K562 (cell line): ENCODE measurements at regions of chr1 and their contacts with region 1.

Region 1: DNA sequence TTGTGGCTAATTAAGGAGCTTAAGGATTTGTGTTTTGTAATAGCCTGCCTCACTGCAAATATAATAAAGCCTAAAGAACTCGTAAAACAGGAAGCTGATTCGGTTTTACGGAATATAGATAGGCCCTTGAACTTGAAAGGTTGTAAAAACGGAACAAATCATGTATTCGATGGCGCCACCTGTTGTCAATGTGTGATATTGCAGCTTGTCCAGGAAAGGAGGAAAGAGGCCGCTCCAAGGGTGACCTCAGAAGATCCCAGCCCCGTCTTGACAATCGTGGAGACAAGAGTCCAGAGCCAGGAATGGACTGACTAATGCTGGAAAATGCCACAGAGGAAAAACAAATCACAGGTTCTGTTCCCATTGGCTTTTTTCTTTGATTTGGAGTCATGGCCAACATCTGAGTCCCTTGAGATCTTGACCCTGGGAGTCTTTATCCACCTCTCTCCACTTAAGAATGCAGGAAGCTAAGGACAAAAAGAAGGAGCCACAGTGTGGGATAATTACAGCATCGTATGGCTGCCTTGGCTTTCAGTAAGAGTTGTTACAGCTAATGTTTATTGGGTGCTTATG is 7.0 kb upstream of the IGSF21 start:
- DNase-seq: peak; percentile 71 to 88 (median 82)
- ATAC-seq: peak; percentile 82
- H3K4me3 ChIP-seq: no peak overlapping the region
- H3K27ac ChIP-seq: no peak overlapping the region
- H3K4me1 ChIP-seq: no peaks in the 10 kb centered on the region
- H3K27me3 ChIP-seq: no peaks in the 10 kb centered on the region; a peak in 1 of 5 replicates
- CTCF ChIP-seq: peak; percentile 65 to 89 (median 83)
- EP300 ChIP-seq: no peak
- POLR2A ChIP-seq: no peak
- RAD21 ChIP-seq: peak; percentile 35 to 74

Region 2: DNA sequence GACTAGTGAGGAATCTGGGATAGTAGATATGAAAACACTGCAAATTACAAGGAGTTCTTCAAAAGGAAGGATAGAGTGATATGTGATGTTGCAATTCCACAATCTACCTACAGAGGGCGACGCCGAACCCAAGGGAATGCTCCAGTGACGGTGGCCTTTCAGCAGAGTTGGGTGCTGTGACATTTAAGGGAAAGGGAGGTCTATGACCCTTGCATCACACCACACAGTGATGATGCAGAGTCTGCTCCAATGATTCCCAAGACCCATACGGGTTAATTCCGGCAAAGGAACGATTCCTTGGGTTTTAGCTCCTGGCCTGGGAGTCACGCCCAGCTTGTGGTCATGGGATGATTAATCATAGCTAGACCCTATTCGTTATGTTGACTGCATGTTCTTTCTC is 116.0 kb before region 1 on chr1:
- CTCF ChIA-PET with region 1: no interaction called
- POLR2A ChIA-PET with region 1: no interaction called
- in situ Hi-C with region 1: no loop called
- intact Hi-C with region 1: loop called (anchors 10 kb)
- DNase-seq: peak; percentile 62 to 74 (median 70)
- ATAC-seq: peak; percentile 81
- H3K4me3 ChIP-seq: no peak overlapping the region
- H3K27ac ChIP-seq: no peak overlapping the region
- H3K4me1 ChIP-seq: no peaks in the 10 kb centered on the region
- H3K27me3 ChIP-seq: no peaks in the 10 kb centered on the region; a peak in 1 of 5 replicates
- CTCF ChIP-seq: peak; percentile 68 to 89 (median 80)
- EP300 ChIP-seq: no peak
- POLR2A ChIP-seq: no peak
- RAD21 ChIP-seq: peak in 1 of 2 experiments; percentile 53; a peak in 2 of 4 replicates

Region 3: DNA sequence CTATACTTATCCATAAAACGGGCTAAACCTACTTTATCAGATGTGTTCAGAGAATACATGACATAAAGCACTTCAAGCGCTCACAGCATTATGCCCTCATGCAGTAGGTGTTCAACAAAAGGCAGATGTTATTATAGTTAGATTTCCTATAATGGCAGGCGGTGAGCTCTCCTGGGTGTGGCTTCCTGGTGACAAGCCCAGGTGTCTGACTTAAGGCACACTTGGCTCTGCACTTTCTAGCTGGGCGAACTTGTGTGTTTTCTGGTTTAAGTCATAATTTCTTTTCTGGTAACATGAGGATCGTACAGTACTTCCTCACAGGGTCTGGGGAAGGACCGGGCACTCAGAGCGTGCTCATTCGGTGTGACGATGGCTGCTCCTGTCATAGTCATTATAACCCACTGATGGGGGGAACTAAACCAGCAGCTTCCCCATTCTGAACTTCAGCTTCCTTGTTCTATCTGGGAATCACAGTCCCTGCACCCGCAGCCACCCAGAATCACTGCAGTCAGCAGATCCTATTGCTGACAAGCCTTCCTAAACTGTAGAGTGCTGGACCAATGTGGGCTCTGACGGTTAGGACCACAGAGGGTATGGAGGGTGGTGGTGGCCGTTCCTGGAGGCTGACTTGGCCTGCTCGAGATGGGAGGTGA is 59.8 kb after region 1 on chr1:
- CTCF ChIA-PET with region 1: no interaction called
- POLR2A ChIA-PET with region 1: no interaction called
- in situ Hi-C with region 1: no loop called
- intact Hi-C with region 1: no loop called
- DNase-seq: no peak
- ATAC-seq: no peak
- H3K4me3 ChIP-seq: no peak overlapping the region
- H3K27ac ChIP-seq: no peak overlapping the region
- H3K4me1 ChIP-seq: no peaks in the 10 kb centered on the region
- H3K27me3 ChIP-seq: peaks cover 6 to 25% of the 10 kb centered on the region in 2 experiments; a peak in 3 of 5 replicates
- CTCF ChIP-seq: no peak
- EP300 ChIP-seq: no peak
- POLR2A ChIP-seq: no peak
- RAD21 ChIP-seq: no peak